ENCODE measurements at regions of chr2 and their contacts with region 1.

Region 1: GRCh38 chr2:1817256-1818051 is 73.1 kb upstream of the PXDN start:
- DNase-seq: peak; percentile 80 to 98
- H3K4me3 ChIP-seq: peak overlapping the region in 1 of 2 donors; percentile 43
- H3K27ac ChIP-seq: peak overlapping the region; percentile 90 to 98
- H3K4me1 ChIP-seq: peaks cover 5 to 32% of the 10 kb centered on the region in 2 donors
- H3K27me3 ChIP-seq: no peaks in the 10 kb centered on the region
- CTCF ChIP-seq: peak; percentile 97 to 99 (median 99)

Region 2: DNA sequence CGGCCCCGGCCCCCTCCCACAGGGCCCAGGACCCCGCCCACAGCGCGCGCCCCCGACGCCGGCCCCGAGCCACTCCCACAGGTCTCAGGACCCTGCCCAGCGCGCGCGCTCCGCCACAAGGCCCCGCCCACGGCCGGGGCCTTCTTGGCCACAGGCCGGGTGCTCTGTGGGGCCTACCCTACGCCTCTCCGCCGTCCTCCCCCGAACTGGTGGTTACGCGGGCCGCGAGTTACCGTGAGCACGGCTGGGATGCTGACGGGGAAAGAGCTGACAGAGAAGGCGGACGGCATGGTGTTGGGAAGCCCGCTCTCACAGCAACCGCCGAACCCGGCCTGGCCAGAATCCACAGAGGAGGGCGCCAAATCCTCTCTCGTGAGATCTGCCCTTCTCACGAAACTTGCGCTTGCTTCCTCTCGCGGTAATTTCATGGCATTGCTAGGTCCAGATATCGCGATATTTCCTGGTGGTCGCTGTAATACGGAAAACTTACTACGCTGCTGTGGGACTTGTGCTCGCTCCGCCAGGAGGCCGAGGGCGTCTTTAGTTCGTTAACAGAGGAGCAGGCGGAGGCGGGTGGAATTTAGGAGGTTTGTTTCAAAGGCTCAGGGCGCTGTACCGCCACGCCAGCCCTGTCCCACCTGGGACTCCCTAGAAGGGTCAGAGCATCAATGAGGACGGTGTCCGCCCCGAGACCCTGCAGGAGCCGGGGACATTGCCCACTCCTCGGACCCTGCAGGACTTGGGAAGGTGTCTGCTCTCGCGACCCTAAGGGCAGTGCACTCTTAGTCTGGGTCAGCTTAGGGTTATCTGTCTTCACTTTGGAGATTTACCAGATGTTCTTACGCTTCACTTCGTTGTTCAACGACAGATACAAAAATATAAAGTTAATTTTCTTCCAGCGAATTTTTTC is 1140.1 kb before region 1 on chr2 and contains the start of gene TMEM18:
- intact Hi-C with region 1: loop called (anchors 5 kb)
- DNase-seq: peak; percentile 84 to 98
- H3K4me3 ChIP-seq: peak within 1 kb of the TSS; percentile 60 to 88
- H3K27ac ChIP-seq: peak within 1 kb of the TSS; percentile 94
- H3K4me1 ChIP-seq: no peaks in the 10 kb centered on the region
- H3K27me3 ChIP-seq: no peaks in the 10 kb centered on the region
- CTCF ChIP-seq: peak in 2 of 3 experiments; percentile 7 to 34
- total RNA-seq, gene TMEM18: 6.4 TPM

Region 3: GRCh38 chr2:1675633-1676032 is 141.8 kb before region 1 on chr2:
- intact Hi-C with region 1: loop called (anchors 5 kb)
- DNase-seq: peak; percentile 39 to 86
- H3K4me3 ChIP-seq: no peak overlapping the region
- H3K27ac ChIP-seq: peak overlapping the region; percentile 49 to 76
- H3K4me1 ChIP-seq: peaks cover 0 to 8% of the 10 kb centered on the region in 2 donors
- H3K27me3 ChIP-seq: no peaks in the 10 kb centered on the region
- CTCF ChIP-seq: peak; percentile 19 to 53 (median 35)

Region 4: GRCh38 chr2:1717113-1717512 is 100.3 kb before region 1 on chr2:
- intact Hi-C with region 1: no loop called
- DNase-seq: peak in 1 of 2 donors; percentile 70
- H3K4me3 ChIP-seq: no peak overlapping the region
- H3K27ac ChIP-seq: peak overlapping the region; percentile 60 to 77
- H3K4me1 ChIP-seq: peaks cover 18 to 50% of the 10 kb centered on the region in 2 donors
- H3K27me3 ChIP-seq: no peaks in the 10 kb centered on the region
- CTCF ChIP-seq: no peak

Region 5: DNA sequence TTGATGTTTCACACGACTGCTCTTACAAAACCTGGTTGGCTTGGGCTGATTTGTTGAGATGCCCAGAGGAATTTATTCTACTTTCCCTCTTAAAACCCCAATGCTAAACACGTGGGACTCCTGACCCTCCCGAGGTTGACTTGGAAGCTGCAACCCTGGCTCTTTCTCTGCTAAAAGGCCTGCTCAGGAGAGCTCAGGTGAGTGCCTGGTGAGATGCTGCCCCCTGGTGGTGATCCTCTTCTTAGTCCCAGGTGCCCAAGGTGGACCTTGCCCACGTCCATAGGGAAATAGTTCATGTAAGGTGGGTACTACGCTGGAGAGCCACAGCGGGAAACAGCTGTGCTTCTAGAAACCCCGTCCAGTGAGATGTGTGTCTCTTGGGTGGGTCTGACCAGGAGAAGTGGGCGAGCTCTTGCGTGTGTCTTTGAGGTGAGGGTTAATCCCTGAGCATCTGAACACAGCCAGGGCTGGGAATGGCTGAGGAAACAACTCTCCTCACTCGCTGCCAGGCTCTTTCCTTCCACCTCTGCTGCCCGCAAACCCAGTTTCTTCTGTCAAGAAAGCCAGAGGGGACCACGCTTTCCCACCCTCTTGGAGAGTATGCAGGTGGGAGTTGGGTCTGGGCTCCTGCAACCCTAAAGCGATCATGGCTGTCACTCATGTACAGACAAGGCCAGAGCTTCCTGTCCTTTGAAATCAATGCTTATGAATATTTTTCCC is 47.6 kb before region 1 on chr2:
- intact Hi-C with region 1: loop called (anchors 5 kb)
- DNase-seq: peak in 1 of 2 donors; percentile 76
- H3K4me3 ChIP-seq: no peak overlapping the region
- H3K27ac ChIP-seq: no peak overlapping the region
- H3K4me1 ChIP-seq: peaks cover 7 to 18% of the 10 kb centered on the region in 2 donors
- H3K27me3 ChIP-seq: no peaks in the 10 kb centered on the region
- CTCF ChIP-seq: peak in 2 of 3 experiments; percentile 71 to 74

Region 6: GRCh38 chr2:1791685-1792435 is 25.6 kb before region 1 on chr2:
- intact Hi-C with region 1: loop called (anchors 2 kb)
- DNase-seq: peak in 1 of 2 donors; percentile 82
- H3K4me3 ChIP-seq: peak overlapping the region in 1 of 2 donors; percentile 13
- H3K27ac ChIP-seq: no peak overlapping the region
- H3K4me1 ChIP-seq: no peaks in the 10 kb centered on the region
- H3K27me3 ChIP-seq: no peaks in the 10 kb centered on the region
- CTCF ChIP-seq: no peak

Region 7: GRCh38 chr2:1923541-1923940 is 106.1 kb after region 1 on chr2:
- intact Hi-C with region 1: no loop called
- DNase-seq: no peak
- H3K4me3 ChIP-seq: no peak overlapping the region
- H3K27ac ChIP-seq: no peak overlapping the region
- H3K4me1 ChIP-seq: no peaks in the 10 kb centered on the region
- H3K27me3 ChIP-seq: no peaks in the 10 kb centered on the region
- CTCF ChIP-seq: no peak

Region 8: GRCh38 chr2:2026252-2026831 is 208.9 kb after region 1 on chr2:
- intact Hi-C with region 1: no loop called
- DNase-seq: no peak
- H3K4me3 ChIP-seq: no peak overlapping the region
- H3K27ac ChIP-seq: no peak overlapping the region
- H3K4me1 ChIP-seq: no peaks in the 10 kb centered on the region
- H3K27me3 ChIP-seq: no peaks in the 10 kb centered on the region
- CTCF ChIP-seq: no peak